ENCODE measurements at regions of chr10 and their contacts with region 1.

Region 1: DNA sequence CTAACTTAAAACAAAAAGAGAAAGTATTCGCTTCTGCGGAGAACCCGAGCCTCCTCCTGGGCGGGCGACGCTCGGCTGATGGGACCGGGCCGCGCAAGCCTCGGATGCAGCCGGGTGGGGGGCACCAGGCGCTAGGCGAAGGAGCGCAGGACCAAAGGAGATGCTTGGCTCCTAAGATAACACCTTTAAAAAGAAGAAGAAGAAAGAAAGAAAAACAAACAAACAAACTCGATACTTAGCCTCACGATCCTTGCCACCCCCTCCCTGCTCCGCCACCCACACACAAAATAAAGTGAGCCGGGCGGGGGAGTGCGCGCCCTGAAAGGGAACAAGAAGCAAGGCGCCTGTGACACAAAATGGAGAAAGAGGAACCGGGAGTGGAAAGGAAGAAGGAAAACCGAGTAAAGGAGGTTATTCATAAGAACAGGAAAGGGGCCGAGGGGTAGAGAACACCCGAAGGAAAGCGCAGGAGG is 34.0 kb upstream of the EBLN1 start:
- DNase-seq: peak; percentile 88

Region 2: DNA sequence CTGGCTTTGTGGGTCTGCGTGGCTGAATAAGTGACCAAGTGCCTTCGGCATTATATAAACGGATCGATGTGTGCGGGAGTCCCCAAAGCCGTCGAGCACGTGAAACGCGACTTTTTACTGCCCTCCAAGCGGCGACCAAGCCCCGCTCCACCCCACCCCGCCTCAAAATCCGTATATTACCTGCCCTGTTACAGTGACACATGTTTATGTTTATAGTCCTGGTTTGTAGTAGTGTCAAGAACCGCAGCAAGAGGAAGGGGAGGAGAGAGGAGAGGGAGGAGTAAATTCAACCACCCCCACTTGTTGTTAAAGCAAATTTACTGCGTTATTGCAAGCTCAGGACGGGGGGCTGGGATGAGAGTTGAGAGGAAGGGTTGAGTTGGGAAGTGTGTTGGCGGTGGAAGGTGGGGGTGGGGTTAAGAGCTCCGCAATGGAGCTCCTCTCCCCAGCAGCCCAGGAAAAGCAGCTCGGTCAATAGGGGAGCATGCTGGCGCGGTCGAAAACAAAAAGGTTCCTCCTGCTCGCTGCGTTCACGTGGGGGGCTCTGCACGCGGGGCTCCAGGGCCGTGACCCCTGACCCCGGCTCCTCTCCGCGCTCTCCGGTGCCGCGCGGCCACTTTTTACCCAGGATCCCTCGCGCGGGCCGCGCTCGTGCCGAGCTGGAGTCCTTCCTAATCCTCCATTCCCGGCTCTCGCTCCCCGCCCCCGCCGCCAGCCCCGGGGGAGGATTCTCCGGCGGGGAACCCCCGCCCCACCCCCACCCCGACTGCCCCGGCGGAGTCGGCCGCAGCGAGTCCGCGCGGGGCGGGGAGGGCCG is 726.2 kb before region 1 on chr10 and contains the start of gene SKIDA1:
- intact Hi-C with region 1: loop called (anchors 5 kb)
- DNase-seq: peak; percentile 90
- total RNA-seq, gene SKIDA1: 1.8 TPM

Region 3: DNA sequence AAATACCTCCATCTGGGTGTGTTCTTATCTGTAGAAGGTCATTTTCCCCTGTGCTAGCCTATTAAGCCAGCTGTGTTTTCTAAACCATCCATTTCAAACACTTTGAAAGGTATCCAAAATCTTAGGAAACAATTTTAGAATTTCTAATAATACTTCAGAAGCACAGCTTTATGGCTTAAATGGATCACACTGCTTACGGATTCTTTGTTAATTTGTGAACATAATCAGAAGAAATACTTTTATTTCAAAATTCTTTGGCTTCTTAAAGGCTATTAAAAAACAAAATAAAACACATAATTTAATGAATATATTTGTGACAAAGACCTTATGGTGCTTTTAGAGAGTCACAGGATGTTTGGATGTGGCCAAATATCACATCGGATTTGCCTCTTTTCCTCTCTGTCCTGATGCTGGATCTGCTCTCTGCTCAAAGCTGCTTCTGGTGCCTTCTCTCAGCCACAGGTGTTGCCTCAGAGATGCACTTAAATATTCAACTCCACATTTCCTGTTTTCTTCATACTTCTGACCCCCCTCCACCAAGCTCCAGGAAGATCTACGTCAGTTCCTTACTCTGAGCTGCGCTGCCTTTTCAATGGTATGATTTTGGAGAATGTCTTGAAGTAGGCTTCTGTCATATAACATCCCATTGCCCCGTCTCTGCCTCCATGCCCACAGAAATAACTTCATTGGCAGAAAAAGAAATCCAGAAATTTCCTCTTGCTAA is 487.2 kb before region 1 on chr10:
- intact Hi-C with region 1: no loop called
- DNase-seq: no peak

Region 4: GRCh38 chr10:22183771-22184461 is 67.9 kb before region 1 on chr10:
- intact Hi-C with region 1: no loop called
- DNase-seq: no peak

Region 5: DNA sequence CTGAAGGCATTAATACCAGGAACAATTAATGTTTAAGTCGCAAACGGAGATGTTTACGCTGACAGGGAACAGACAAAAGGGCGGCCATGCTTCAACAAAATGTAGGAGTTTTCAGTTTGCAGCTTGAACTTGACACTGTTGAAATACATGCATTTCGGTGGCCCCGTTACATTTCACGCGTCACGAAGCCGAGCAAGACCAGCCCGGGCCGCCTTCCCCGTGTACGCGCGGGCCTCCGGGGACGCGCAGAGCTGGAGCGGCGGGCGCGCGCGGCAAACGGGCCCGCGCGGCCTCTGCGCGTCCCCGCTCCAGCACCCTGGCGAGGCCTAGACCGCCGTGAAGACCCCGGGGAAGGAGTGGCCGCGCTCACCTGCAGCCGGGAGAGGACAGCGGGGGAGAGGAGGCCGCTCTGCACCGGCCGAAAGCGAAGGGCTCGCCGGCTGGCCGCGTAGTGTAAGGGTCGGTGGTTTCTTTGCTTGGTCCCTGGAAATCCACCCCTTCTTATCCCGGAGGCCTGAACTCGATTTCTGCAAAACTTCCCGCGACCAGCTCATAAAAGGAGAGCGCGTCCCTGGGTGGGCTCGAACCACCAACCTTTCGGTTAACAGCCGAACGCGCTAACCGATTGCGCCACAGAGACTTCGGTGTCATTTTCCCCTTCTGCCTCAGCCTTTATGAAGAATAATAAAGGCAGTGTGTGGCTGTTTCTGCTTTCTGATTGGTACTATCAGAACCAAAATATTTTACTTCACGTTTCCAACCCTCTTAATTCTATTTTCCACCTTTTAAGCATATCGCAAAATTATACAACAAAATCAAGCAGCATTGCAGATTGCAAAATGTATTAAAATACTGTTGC is 22.6 kb before region 1 on chr10:
- intact Hi-C with region 1: loop called (anchors 1 kb)
- DNase-seq: peak; percentile 88

Region 6: DNA sequence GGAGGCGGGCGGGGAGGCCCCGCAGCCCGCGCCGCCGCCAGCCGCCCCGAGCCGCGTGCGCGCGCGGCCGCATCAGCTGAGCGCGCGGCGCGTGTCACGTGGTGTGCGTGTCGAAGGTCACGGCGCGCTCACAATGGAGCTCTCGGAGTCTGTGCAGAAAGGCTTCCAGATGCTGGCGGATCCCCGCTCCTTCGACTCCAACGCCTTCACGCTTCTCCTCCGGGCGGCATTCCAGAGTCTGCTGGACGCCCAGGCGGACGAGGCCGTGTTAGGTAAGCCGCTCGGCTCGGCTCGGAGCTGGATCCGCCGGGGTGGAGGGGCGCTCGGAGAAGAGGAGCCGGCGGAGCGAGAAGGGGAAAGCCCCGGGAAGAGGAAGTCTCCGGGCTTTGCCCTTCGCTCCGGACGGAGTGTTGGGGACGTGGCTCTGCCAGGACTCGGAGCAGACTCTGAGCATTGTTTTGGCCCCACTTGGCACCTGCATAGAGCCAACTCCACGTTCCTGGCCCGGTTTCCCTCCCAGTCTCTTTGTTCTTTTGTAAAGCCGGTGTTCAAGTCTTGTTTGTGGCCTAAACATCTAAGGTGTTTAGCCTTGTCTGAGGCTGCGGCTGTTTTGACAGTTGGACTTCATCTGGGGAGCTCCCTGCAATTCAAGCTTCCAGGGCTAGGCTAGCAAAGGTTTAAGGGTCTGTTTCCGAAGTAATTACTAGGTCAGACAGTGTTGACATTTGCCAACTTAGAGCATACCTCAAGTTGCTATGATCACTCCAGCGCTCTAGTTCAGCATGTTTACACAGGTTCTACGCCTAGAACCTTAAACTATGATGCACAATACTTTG is 64.7 kb after region 1 on chr10 and contains the start of gene COMMD3:
- intact Hi-C with region 1: loop called (anchors 2 kb)
- DNase-seq: peak; percentile 96
- total RNA-seq, gene COMMD3: 71.6 TPM

Region 7: DNA sequence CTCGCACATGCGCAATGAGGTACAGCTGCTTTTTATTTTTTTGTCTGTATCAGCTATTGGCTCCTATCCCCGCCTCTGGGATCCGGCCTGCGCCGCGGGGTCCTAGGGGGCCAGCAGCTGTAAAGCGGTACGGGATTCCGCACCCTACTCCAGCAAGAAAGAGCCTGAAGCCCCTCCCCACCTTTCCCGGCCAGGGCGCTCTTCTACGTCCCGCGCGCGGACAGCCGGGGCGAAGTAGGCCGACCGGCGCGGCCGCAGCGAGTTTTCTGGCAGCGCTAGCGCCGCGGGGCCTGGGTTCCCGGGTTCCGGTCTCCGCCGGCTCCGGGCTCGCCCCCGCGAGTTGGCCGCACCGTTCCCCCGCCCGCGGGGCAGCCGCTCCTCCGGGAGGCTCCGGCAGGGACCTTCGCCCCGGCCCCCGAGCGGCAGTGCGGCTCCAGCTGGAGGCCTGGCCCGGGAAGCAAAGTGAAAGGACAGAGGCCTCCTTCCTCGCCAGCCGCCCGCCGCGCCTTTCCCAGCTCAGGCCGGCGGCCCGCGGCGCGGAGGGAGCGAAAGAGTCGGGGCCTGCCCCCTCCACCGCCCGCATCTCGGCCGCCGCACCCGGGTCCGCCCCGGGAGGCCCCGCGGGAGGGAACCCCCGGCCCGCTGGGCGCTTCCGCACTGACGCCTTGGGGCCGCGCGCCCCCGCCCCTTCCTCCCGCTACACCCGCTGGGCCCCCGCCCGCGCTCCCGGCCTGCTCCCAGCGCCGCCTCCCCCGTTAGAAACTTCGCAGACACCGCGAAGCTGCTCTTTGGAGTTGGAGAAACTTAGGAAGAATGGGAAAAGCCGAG is 88.8 kb after region 1 on chr10:
- intact Hi-C with region 1: loop called (anchors 5 kb)
- DNase-seq: peak; percentile 87

Region 8: DNA sequence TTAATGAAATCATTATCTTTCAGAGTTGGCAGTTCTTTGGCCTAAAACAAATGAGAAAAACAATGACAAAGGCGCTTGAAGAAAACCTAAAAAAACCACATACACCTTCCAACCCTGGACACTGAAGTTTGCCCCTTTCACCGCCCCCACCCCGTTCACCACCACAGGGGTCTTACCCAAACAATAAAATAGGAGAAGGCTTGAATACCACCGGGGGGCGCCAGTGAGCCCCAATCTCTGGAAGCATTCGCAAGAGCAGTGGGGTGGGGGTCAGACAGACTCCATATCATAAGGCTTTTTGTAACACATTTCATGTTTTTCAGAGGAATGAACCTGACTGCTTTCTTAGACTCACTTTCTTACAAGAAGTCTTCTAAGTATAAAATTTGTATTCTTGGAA is 298.9 kb after region 1 on chr10:
- intact Hi-C with region 1: no loop called
- DNase-seq: no peak

Measured in cardiac septum (tissue), 1 donor.